CD4-positive, alpha-beta memory T cell (primary cell): ENCODE measurements at regions of chr14 and their contacts with region 1.

Region 1: GRCh38 chr14:52791203-52792096 is at the start of gene GNPNAT1:
- DNase-seq: peak; percentile 90 to 93 (median 92)
- H3K4me3 ChIP-seq: peak within 1 kb of the TSS; percentile 57 to 90
- H3K4me3 Mint-ChIP-seq: peak within 1 kb of the TSS; percentile 88 to 97 (median 92)
- H3K27ac ChIP-seq: peak within 1 kb of the TSS; percentile 70
- H3K27ac Mint-ChIP-seq: peak within 1 kb of the TSS; percentile 90 to 96 (median 94)
- H3K4me1 ChIP-seq: peaks cover 32% of the 10 kb centered on the region
- H3K4me1 Mint-ChIP-seq: peaks cover 27 to 48% (median 36%) of the 10 kb centered on the region in 4 donors
- H3K27me3 ChIP-seq: no peaks in the 10 kb centered on the region
- H3K27me3 Mint-ChIP-seq: no peaks in the 10 kb centered on the region
- total RNA-seq, gene GNPNAT1: 10.0 to 15.2 TPM

Region 2: GRCh38 chr14:52706724-52707706 is 84.4 kb before region 1 on chr14 and contains the start of gene PSMC6:
- CTCF ChIA-PET with region 1: no interaction called
- POLR2A ChIA-PET with region 1: interaction called, 3 read pairs
- intact Hi-C with region 1: loop called (anchors 1 kb)
- DNase-seq: peak; percentile 88 to 95 (median 90)
- H3K4me3 ChIP-seq: peak within 1 kb of the TSS; percentile 92 to 96
- H3K4me3 Mint-ChIP-seq: peak within 1 kb of the TSS; percentile 92 to 100 (median 96)
- H3K27ac ChIP-seq: peak within 1 kb of the TSS; percentile 77
- H3K27ac Mint-ChIP-seq: peak within 1 kb of the TSS; percentile 94 to 99 (median 98)
- H3K4me1 ChIP-seq: peaks cover 43% of the 10 kb centered on the region
- H3K4me1 Mint-ChIP-seq: peaks cover 20 to 56% (median 36%) of the 10 kb centered on the region in 4 donors
- H3K27me3 ChIP-seq: no peaks in the 10 kb centered on the region
- H3K27me3 Mint-ChIP-seq: no peaks in the 10 kb centered on the region
- total RNA-seq, gene PSMC6: 85.7 to 86.0 TPM

Region 3: GRCh38 chr14:52729925-52730667 is 61.4 kb before region 1 on chr14 and contains the start of gene STYX:
- CTCF ChIA-PET with region 1: interaction called, 3 read pairs
- POLR2A ChIA-PET with region 1: interaction called, 4 read pairs
- intact Hi-C with region 1: loop called (anchors 1 kb)
- DNase-seq: peak; percentile 95 to 97 (median 96)
- H3K4me3 ChIP-seq: peak within 1 kb of the TSS; percentile 71
- H3K4me3 Mint-ChIP-seq: peak within 1 kb of the TSS; percentile 80 to 96 (median 93)
- H3K27ac ChIP-seq: peak within 1 kb of the TSS; percentile 88
- H3K27ac Mint-ChIP-seq: peak within 1 kb of the TSS; percentile 79 to 97 (median 95)
- H3K4me1 ChIP-seq: peaks cover 36% of the 10 kb centered on the region
- H3K4me1 Mint-ChIP-seq: peaks cover 17 to 53% (median 38%) of the 10 kb centered on the region in 4 donors
- H3K27me3 ChIP-seq: no peaks in the 10 kb centered on the region
- H3K27me3 Mint-ChIP-seq: no peaks in the 10 kb centered on the region
- total RNA-seq, gene STYX: 47.1 to 47.3 TPM

Region 4: DNA sequence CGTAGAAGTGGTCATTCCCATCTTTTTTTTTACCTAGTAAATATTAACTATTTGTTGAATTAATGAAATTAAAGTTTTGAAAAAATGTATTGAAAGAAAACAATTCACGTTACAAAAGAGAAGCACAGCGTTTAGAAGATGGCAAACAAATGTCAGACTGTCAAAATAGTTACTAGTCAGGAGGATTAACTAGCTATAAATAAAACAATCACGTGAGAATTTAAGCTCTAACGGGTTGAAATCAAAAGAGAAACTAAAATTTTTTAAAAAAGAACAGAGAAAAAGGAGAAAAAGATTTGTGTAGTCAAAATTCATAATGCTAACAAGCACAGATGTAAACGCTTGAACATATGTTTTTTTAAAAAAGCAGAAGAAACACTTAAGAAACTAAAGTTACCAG is 335.3 kb after region 1 on chr14:
- CTCF ChIA-PET with region 1: no interaction called
- POLR2A ChIA-PET with region 1: no interaction called
- intact Hi-C with region 1: no loop called
- DNase-seq: no peak
- H3K4me3 ChIP-seq: no peak overlapping the region
- H3K4me3 Mint-ChIP-seq: peak overlapping the region; percentile 69 to 82 (median 78)
- H3K27ac ChIP-seq: peak overlapping the region; percentile 35
- H3K27ac Mint-ChIP-seq: peak overlapping the region in 6 of 7 donors; percentile 16 to 87 (median 83)
- H3K4me1 ChIP-seq: peaks cover 33% of the 10 kb centered on the region
- H3K4me1 Mint-ChIP-seq: peaks cover 13 to 24% (median 19%) of the 10 kb centered on the region in 4 donors
- H3K27me3 ChIP-seq: no peaks in the 10 kb centered on the region
- H3K27me3 Mint-ChIP-seq: no peaks in the 10 kb centered on the region